Breast epithelium (tissue), 4 donors: ENCODE measurements at regions of chr1 and their contacts with region 1.

Region 1: GRCh38 chr1:106465666-106466065 is 590.8 kb upstream of the PRMT6 start:
- DNase-seq: no peak
- H3K4me3 ChIP-seq: no peak overlapping the region
- H3K27ac ChIP-seq: no peak overlapping the region
- H3K4me1 ChIP-seq: no peaks in the 10 kb centered on the region
- H3K27me3 ChIP-seq: no peaks in the 10 kb centered on the region
- CTCF ChIP-seq: no peak
- POLR2A ChIP-seq: no peak

Region 2: GRCh38 chr1:106504675-106505074 is 39.0 kb after region 1 on chr1:
- intact Hi-C with region 1: no loop called
- DNase-seq: no peak
- H3K4me3 ChIP-seq: no peak overlapping the region
- H3K27ac ChIP-seq: no peak overlapping the region
- H3K4me1 ChIP-seq: no peaks in the 10 kb centered on the region
- H3K27me3 ChIP-seq: no peaks in the 10 kb centered on the region
- CTCF ChIP-seq: no peak
- POLR2A ChIP-seq: no peak

Region 3: GRCh38 chr1:106957783-106958182 is 492.1 kb after region 1 on chr1:
- intact Hi-C with region 1: no loop called
- DNase-seq: no peak
- H3K4me3 ChIP-seq: no peak overlapping the region
- H3K27ac ChIP-seq: no peak overlapping the region
- H3K4me1 ChIP-seq: no peaks in the 10 kb centered on the region
- H3K27me3 ChIP-seq: no peaks in the 10 kb centered on the region
- CTCF ChIP-seq: no peak
- POLR2A ChIP-seq: no peak

Region 4: GRCh38 chr1:107359472-107360241 is 894.0 kb after region 1 on chr1:
- intact Hi-C with region 1: loop called (anchors 10 kb)
- DNase-seq: no peak
- H3K4me3 ChIP-seq: no peak overlapping the region
- H3K27ac ChIP-seq: no peak overlapping the region
- H3K4me1 ChIP-seq: no peaks in the 10 kb centered on the region
- H3K27me3 ChIP-seq: no peaks in the 10 kb centered on the region
- CTCF ChIP-seq: no peak
- POLR2A ChIP-seq: no peak